ENCODE measurements at regions of chr12 and their contacts with region 1.

Region 1: DNA sequence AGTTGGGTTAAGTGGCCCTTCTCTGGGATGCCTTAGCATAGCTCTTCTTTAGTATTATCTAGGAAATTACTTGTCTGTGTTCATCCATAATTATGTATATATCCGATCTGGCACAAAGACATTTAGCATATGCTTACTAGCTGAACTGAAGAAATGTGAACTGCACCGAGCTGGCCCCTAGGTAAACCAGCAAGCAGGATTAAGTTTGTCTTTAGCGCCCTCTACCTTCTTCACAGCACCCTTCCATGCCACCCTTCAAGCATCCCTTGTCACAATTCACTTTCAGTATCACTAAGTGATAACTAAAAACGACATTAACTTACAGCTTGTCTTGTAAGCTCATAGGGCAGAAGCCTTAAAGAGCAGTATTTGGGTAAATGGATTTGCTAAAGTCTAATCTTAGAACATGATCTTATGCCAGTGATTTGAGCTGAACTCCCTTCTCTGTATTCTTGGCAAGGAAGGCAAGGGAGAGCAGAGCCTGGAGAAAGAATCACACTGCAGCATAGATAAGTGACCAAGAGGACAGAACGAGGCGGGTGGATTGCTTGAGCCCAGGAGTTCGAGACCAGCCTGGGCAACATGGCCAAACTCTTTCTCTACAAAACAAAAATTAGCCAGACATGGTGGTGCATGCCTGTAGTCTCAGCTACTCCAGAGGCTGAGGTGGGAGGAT is 2.6 kb upstream of the HAL start:
- DNase-seq: peak; percentile 9 to 78 (median 36)
- ATAC-seq: peak; percentile 93
- H3K4me3 ChIP-seq: no peak overlapping the region
- H3K4me3 Mint-ChIP-seq: no peak overlapping the region
- H3K27ac ChIP-seq: no peak overlapping the region
- H3K27ac Mint-ChIP-seq: peak overlapping the region; percentile 24
- H3K4me1 ChIP-seq: no peaks in the 10 kb centered on the region
- H3K4me1 Mint-ChIP-seq: peaks cover 3% of the 10 kb centered on the region
- H3K27me3 ChIP-seq: no peaks in the 10 kb centered on the region
- H3K27me3 Mint-ChIP-seq: no peaks in the 10 kb centered on the region
- CTCF ChIP-seq: peak; percentile 69

Region 2: GRCh38 chr12:95117178-95117599 is 881.6 kb before region 1 on chr12:
- CTCF ChIA-PET with region 1: no interaction called
- POLR2A ChIA-PET with region 1: no interaction called
- intact Hi-C with region 1: loop called in 1 of 2 experiments (anchors 2 kb)
- DNase-seq: peak; percentile 21 to 78 (median 67)
- ATAC-seq: peak; percentile 83
- H3K4me3 ChIP-seq: no peak overlapping the region
- H3K4me3 Mint-ChIP-seq: no peak overlapping the region
- H3K27ac ChIP-seq: no peak overlapping the region
- H3K27ac Mint-ChIP-seq: no peak overlapping the region
- H3K4me1 ChIP-seq: no peaks in the 10 kb centered on the region
- H3K4me1 Mint-ChIP-seq: no peaks in the 10 kb centered on the region
- H3K27me3 ChIP-seq: no peaks in the 10 kb centered on the region
- H3K27me3 Mint-ChIP-seq: no peaks in the 10 kb centered on the region
- CTCF ChIP-seq: peak; percentile 75

Region 3: GRCh38 chr12:95858479-95859343 is 140.0 kb before region 1 on chr12 and contains the start of gene SNRPF:
- CTCF ChIA-PET with region 1: interaction called, 3 read pairs
- POLR2A ChIA-PET with region 1: no interaction called
- intact Hi-C with region 1: loop called in 1 of 2 experiments (anchors 1 kb)
- DNase-seq: peak; percentile 88 to 97 (median 92)
- ATAC-seq: peak; percentile 94
- H3K4me3 ChIP-seq: peak within 1 kb of the TSS; percentile 83 to 86
- H3K4me3 Mint-ChIP-seq: no peak within 1 kb of the TSS
- H3K27ac ChIP-seq: peak within 1 kb of the TSS; percentile 79 to 92
- H3K27ac Mint-ChIP-seq: no peak within 1 kb of the TSS
- H3K4me1 ChIP-seq: peaks cover 22% of the 10 kb centered on the region
- H3K4me1 Mint-ChIP-seq: peaks cover 21% of the 10 kb centered on the region
- H3K27me3 ChIP-seq: peaks cover 0 to 2% of the 10 kb centered on the region in 2 experiments
- H3K27me3 Mint-ChIP-seq: peaks cover 3% of the 10 kb centered on the region
- CTCF ChIP-seq: no peak
- total RNA-seq, gene SNRPF: 42.9 to 49.2 TPM

Region 4: GRCh38 chr12:95959107-95959506 is 39.6 kb before region 1 on chr12:
- CTCF ChIA-PET with region 1: interaction called, 11 read pairs
- POLR2A ChIA-PET with region 1: no interaction called
- intact Hi-C with region 1: no loop called
- DNase-seq: peak in 2 of 9 experiments; percentile 8 to 11
- ATAC-seq: no peak
- H3K4me3 ChIP-seq: no peak overlapping the region
- H3K4me3 Mint-ChIP-seq: no peak overlapping the region
- H3K27ac ChIP-seq: no peak overlapping the region
- H3K27ac Mint-ChIP-seq: no peak overlapping the region
- H3K4me1 ChIP-seq: no peaks in the 10 kb centered on the region
- H3K4me1 Mint-ChIP-seq: no peaks in the 10 kb centered on the region
- H3K27me3 ChIP-seq: no peaks in the 10 kb centered on the region
- H3K27me3 Mint-ChIP-seq: no peaks in the 10 kb centered on the region
- CTCF ChIP-seq: no peak

Region 5: GRCh38 chr12:96057986-96058560 is 59.3 kb after region 1 on chr12:
- CTCF ChIA-PET with region 1: no interaction called
- POLR2A ChIA-PET with region 1: no interaction called
- intact Hi-C with region 1: no loop called
- DNase-seq: no peak
- ATAC-seq: no peak
- H3K4me3 ChIP-seq: no peak overlapping the region
- H3K4me3 Mint-ChIP-seq: no peak overlapping the region
- H3K27ac ChIP-seq: no peak overlapping the region
- H3K27ac Mint-ChIP-seq: no peak overlapping the region
- H3K4me1 ChIP-seq: no peaks in the 10 kb centered on the region
- H3K4me1 Mint-ChIP-seq: peaks cover 12% of the 10 kb centered on the region
- H3K27me3 ChIP-seq: no peaks in the 10 kb centered on the region
- H3K27me3 Mint-ChIP-seq: no peaks in the 10 kb centered on the region
- CTCF ChIP-seq: no peak

Region 6: DNA sequence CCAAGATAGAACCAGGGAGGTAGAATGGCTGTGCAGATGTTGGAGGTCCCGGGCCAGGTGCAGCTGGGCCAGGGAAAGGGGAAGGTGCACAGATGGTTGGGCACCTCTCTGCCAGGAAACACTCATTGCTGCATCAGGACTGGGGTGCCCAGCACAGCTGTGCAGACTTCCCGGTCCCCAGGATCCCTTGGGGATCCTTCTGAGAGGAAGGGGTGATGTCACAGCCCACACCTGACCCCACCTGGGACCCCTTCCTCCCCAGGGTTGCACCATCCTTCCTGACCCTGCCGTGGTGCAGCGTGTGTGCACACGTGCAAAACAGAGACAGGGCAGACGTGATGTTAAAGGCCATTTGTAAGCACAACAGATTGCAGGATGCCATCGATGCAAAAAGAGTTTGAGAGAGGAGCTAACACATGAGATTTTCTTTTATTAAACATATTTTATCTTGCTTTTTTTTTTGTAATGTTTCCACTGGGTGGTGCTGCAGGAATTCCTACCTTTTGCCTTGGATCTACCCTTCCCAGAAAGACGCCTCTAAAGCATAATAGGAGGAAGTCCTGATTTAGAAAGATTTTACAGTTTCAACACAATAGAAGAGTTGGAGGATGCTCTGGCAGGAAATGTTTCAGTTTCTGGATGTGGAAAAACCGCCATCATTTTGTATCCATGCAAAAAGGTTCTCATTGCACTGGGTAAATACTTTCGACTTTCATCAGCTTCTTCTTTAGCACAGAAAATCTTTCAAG is 210.2 kb after region 1 on chr12:
- CTCF ChIA-PET with region 1: interaction called, 10 read pairs
- POLR2A ChIA-PET with region 1: no interaction called
- intact Hi-C with region 1: no loop called
- DNase-seq: peak in 1 of 9 experiments; percentile 48
- ATAC-seq: no peak
- H3K4me3 ChIP-seq: no peak overlapping the region
- H3K4me3 Mint-ChIP-seq: peak overlapping the region; percentile 30
- H3K27ac ChIP-seq: no peak overlapping the region
- H3K27ac Mint-ChIP-seq: peak overlapping the region; percentile 6
- H3K4me1 ChIP-seq: peaks cover 84% of the 10 kb centered on the region
- H3K4me1 Mint-ChIP-seq: peaks cover 93% of the 10 kb centered on the region
- H3K27me3 ChIP-seq: no peaks in the 10 kb centered on the region
- H3K27me3 Mint-ChIP-seq: no peaks in the 10 kb centered on the region
- CTCF ChIP-seq: no peak

Measured in CD8-positive, alpha-beta T cell (primary cell).